Activated T-helper 1 cell treated with anti-CD3 and anti-CD28 coated beads, Interleukin-12 subunit alpha, Interleukin-12 subunit beta, Interleukin-2, Interleukin-4 antibody, amounts not matched to agents 30 ng/mL and 10 ng/mL and 1 ng/mL, durations not matched to agents 14 hours and 24 hours and 36 hours (primary cell): ENCODE measurements at regions of chr12 and their contacts with region 1.

Region 1: GRCh38 chr12:53220801-53221202 is 11.2 kb downstream of the RARG start:
- DNase-seq: peak; percentile 83
- H3K4me3 Mint-ChIP-seq: peak overlapping the region; percentile 94
- H3K27ac Mint-ChIP-seq: peak overlapping the region; percentile 98
- H3K4me1 Mint-ChIP-seq: peaks cover 83% of the 10 kb centered on the region
- H3K27me3 Mint-ChIP-seq: peaks cover 2% of the 10 kb centered on the region

Region 2: GRCh38 chr12:53054112-53054833 is 166.5 kb before region 1 on chr12:
- intact Hi-C with region 1: loop called (anchors 5 kb)
- DNase-seq: peak; percentile 87
- H3K4me3 Mint-ChIP-seq: peak overlapping the region; percentile 93
- H3K27ac Mint-ChIP-seq: peak overlapping the region; percentile 93
- H3K4me1 Mint-ChIP-seq: peaks cover 18% of the 10 kb centered on the region
- H3K27me3 Mint-ChIP-seq: no peaks in the 10 kb centered on the region

Region 3: GRCh38 chr12:53171725-53172329 is 49.0 kb before region 1 on chr12:
- intact Hi-C with region 1: no loop called
- DNase-seq: no peak
- H3K4me3 Mint-ChIP-seq: no peak overlapping the region
- H3K27ac Mint-ChIP-seq: no peak overlapping the region
- H3K4me1 Mint-ChIP-seq: peaks cover 12% of the 10 kb centered on the region
- H3K27me3 Mint-ChIP-seq: no peaks in the 10 kb centered on the region

Region 4: GRCh38 chr12:53205747-53206419 is 14.9 kb before region 1 on chr12:
- intact Hi-C with region 1: loop called (anchors 1 kb)
- DNase-seq: peak; percentile 74
- H3K4me3 Mint-ChIP-seq: peak overlapping the region; percentile 82
- H3K27ac Mint-ChIP-seq: peak overlapping the region; percentile 90
- H3K4me1 Mint-ChIP-seq: peaks cover 67% of the 10 kb centered on the region
- H3K27me3 Mint-ChIP-seq: no peaks in the 10 kb centered on the region

Region 5: GRCh38 chr12:53251477-53252348 is 30.9 kb after region 1 on chr12:
- intact Hi-C with region 1: loop called (anchors 1 kb)
- DNase-seq: peak; percentile 69
- H3K4me3 Mint-ChIP-seq: peak overlapping the region; percentile 99
- H3K27ac Mint-ChIP-seq: peak overlapping the region; percentile 88
- H3K4me1 Mint-ChIP-seq: peaks cover 50% of the 10 kb centered on the region
- H3K27me3 Mint-ChIP-seq: peaks cover 2% of the 10 kb centered on the region

Region 6: GRCh38 chr12:53625946-53626701 is 405.3 kb after region 1 on chr12 and contains the start of gene ATF7:
- intact Hi-C with region 1: loop called (anchors 5 kb)
- DNase-seq: peak; percentile 98
- H3K4me3 Mint-ChIP-seq: peak within 1 kb of the TSS; percentile 99
- H3K27ac Mint-ChIP-seq: peak within 1 kb of the TSS; percentile 89
- H3K4me1 Mint-ChIP-seq: peaks cover 36% of the 10 kb centered on the region
- H3K27me3 Mint-ChIP-seq: no peaks in the 10 kb centered on the region
- total RNA-seq, gene ATF7: 21.5 and 25.9 TPM in 2 replicates